H1 (cell line): ENCODE measurements at regions of chrX and their contacts with region 1.

Region 1: GRCh38 chrX:152904151-152905080 is 6.5 kb downstream of the ZNF185 start:
- DNase-seq: peak in 1 of 2 experiments; percentile 77
- H3K4me3 ChIP-seq: peak overlapping the region in 2 of 4 experiments; percentile 23 to 47; a peak in 3 of 8 replicates
- H3K27ac ChIP-seq: no peak overlapping the region
- H3K4me1 ChIP-seq: peaks cover 0 to 25% (median 12%) of the 10 kb centered on the region in 4 experiments; a peak in 6 of 7 replicates
- H3K27me3 ChIP-seq: no peaks in the 10 kb centered on the region
- CTCF ChIP-seq: peak in 2 of 3 experiments; percentile 65 to 71; a peak in 3 of 4 replicates
- EP300 ChIP-seq: no peak
- POLR2A ChIP-seq: no peak
- RAD21 ChIP-seq: peak; percentile 40 to 56; a peak in 3 of 4 replicates

Region 2: GRCh38 chrX:152306331-152306730 is 598.1 kb before region 1 on chrX:
- CTCF ChIA-PET with region 1: no interaction called
- POLR2A ChIA-PET with region 1: no interaction called
- DNase-seq: no peak
- H3K4me3 ChIP-seq: no peak overlapping the region
- H3K27ac ChIP-seq: no peak overlapping the region
- H3K4me1 ChIP-seq: no peaks in the 10 kb centered on the region
- H3K27me3 ChIP-seq: no peaks in the 10 kb centered on the region
- CTCF ChIP-seq: no peak
- EP300 ChIP-seq: no peak
- POLR2A ChIP-seq: no peak
- RAD21 ChIP-seq: no peak

Region 3: GRCh38 chrX:152733261-152733975 is 171.0 kb before region 1 on chrX and contains the starts of genes CSAG1 and MAGEA12:
- CTCF ChIA-PET with region 1: no interaction called
- POLR2A ChIA-PET with region 1: no interaction called
- DNase-seq: no peak
- H3K4me3 ChIP-seq: no peak within 1 kb of the TSS
- H3K27ac ChIP-seq: no peak within 1 kb of the TSS
- H3K4me1 ChIP-seq: no peaks in the 10 kb centered on the region
- H3K27me3 ChIP-seq: no peaks in the 10 kb centered on the region
- CTCF ChIP-seq: no peak
- EP300 ChIP-seq: no peak
- POLR2A ChIP-seq: no peak
- RAD21 ChIP-seq: no peak
- total RNA-seq, gene CSAG1: not detected in 2 replicates
- total RNA-seq, gene MAGEA12: not detected in 2 replicates

Region 4: GRCh38 chrX:152926279-152926678 is 21.9 kb after region 1 on chrX:
- CTCF ChIA-PET with region 1: interaction called, 20 read pairs
- POLR2A ChIA-PET with region 1: no interaction called
- DNase-seq: peak in 1 of 2 experiments; percentile 58
- H3K4me3 ChIP-seq: no peak overlapping the region
- H3K27ac ChIP-seq: no peak overlapping the region
- H3K4me1 ChIP-seq: peaks cover 0 to 2% (median under 1%) of the 10 kb centered on the region in 4 experiments; a peak in 4 of 7 replicates
- H3K27me3 ChIP-seq: no peaks in the 10 kb centered on the region
- CTCF ChIP-seq: peak in 2 of 3 experiments; percentile 44 to 60; a peak in 3 of 4 replicates
- EP300 ChIP-seq: no peak
- POLR2A ChIP-seq: no peak
- RAD21 ChIP-seq: peak; percentile 52 to 64

Region 5: DNA sequence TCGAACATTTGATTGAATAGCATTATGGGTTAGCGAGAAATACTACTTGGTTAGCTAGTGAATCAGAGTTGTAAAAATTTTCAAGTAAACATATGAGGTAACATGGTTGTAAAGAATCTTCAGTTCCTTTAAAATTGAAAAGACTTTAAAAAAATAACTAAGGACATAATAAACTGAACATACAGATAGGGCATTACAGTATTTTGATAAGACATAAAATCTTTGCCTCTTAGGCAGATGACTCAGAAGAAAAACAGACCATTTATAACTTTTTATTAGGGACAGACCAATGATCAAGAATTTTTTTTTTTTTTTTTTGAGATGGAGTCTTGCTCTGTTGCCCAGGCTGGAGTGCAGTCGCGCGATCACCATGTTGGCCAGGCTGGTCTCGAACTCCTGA is 46.4 kb after region 1 on chrX:
- CTCF ChIA-PET with region 1: no interaction called
- POLR2A ChIA-PET with region 1: no interaction called
- DNase-seq: no peak
- H3K4me3 ChIP-seq: no peak overlapping the region
- H3K27ac ChIP-seq: no peak overlapping the region
- H3K4me1 ChIP-seq: no peaks in the 10 kb centered on the region
- H3K27me3 ChIP-seq: no peaks in the 10 kb centered on the region
- CTCF ChIP-seq: no peak
- EP300 ChIP-seq: no peak
- POLR2A ChIP-seq: no peak
- RAD21 ChIP-seq: no peak